ENCODE measurements at regions of chr1 and their contacts with region 1.

Region 1: DNA sequence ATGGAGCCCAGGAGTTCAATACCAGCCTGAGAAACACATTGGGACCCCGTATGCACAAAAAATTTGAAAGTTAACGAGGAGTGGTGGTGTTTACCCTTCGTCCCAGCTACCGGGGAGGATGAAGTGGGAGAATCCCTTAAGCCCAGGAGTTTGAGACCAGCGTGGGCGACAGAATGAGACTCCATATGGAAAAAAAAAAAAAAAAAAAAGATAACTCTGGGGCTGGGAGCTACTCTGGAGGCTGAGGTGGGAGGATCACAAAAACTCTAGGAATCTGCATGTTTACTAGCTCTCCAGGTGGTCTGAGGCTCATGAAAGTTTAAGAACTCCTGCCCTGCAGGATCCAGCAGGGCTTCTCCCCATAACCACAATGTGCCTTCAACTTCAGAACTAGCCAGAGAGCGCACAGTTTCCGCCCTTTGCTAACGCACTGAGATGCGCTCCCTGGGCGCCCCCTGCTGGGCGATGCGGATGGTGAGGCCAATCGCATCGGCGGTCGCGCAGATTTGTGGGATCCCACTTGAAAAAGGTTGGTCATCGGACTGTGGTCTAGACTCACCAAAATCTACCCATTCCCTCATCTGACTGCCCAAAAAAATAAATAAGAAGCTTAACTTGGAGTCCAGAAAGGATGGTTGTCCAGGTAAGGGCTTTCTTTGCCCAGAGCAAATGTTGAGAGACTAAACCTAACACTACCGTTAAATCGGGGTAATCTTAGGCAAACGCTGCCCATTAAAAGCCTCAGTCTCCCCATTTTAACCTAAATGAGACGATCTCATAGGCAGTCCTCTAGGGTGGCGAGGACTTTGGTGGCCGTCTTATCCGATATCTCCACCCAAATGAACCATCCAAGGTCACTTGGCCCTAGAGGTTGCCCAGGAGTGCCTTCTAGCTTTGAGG is 8.8 kb downstream of the ZNF683 start:
- DNase-seq: peak; percentile 33
- ATAC-seq: peak; percentile 87
- H3K4me3 ChIP-seq: no peak overlapping the region
- H3K27ac ChIP-seq: no peak overlapping the region
- H3K4me1 ChIP-seq: peaks cover 7 to 21% of the 10 kb centered on the region in 2 experiments; a peak in 3 of 4 replicates
- H3K27me3 ChIP-seq: no peaks in the 10 kb centered on the region
- CTCF ChIP-seq: peak; percentile 89 to 98 (median 98)
- POLR2A ChIP-seq: no peak
- RAD21 ChIP-seq: peak; percentile 89

Region 2: GRCh38 chr1:26378088-26378878 is 14.5 kb after region 1 on chr1:
- CTCF ChIA-PET with region 1: interaction called, 18 read pairs
- POLR2A ChIA-PET with region 1: interaction called, 4 read pairs
- RAD21 ChIA-PET with region 1: interaction called in 1 of 2 experiments, 6 read pairs
- intact Hi-C with region 1: no loop called
- DNase-seq: no peak
- ATAC-seq: peak; percentile 88
- H3K4me3 ChIP-seq: peak overlapping the region in 1 of 2 experiments; percentile 2; a peak in 1 of 4 replicates
- H3K27ac ChIP-seq: peak overlapping the region; percentile 30; the same call in 1 of the 2 replicates
- H3K4me1 ChIP-seq: peaks cover 18 to 25% of the 10 kb centered on the region in 2 experiments
- H3K27me3 ChIP-seq: no peaks in the 10 kb centered on the region
- CTCF ChIP-seq: no peak
- POLR2A ChIP-seq: no peak
- RAD21 ChIP-seq: no peak

Region 3: GRCh38 chr1:26602378-26602959 is 238.7 kb after region 1 on chr1:
- CTCF ChIA-PET with region 1: no interaction called
- POLR2A ChIA-PET with region 1: no interaction called
- RAD21 ChIA-PET with region 1: no interaction called
- intact Hi-C with region 1: no loop called
- DNase-seq: peak; percentile 51
- ATAC-seq: 0 out of 2 replicates have a peak, but pooled peaks have one; percentile 38
- H3K4me3 ChIP-seq: no peak overlapping the region
- H3K27ac ChIP-seq: no peak overlapping the region
- H3K4me1 ChIP-seq: peaks cover 0 to 10% of the 10 kb centered on the region in 2 experiments; a peak in 3 of 4 replicates
- H3K27me3 ChIP-seq: no peaks in the 10 kb centered on the region; the same call in 1 of the 2 replicates
- CTCF ChIP-seq: peak; percentile 77 to 95 (median 92)
- POLR2A ChIP-seq: no peak
- RAD21 ChIP-seq: peak; percentile 99

Region 4: GRCh38 chr1:26692793-26693490 is 329.1 kb after region 1 on chr1:
- CTCF ChIA-PET with region 1: no interaction called
- POLR2A ChIA-PET with region 1: no interaction called
- RAD21 ChIA-PET with region 1: no interaction called
- intact Hi-C with region 1: no loop called
- DNase-seq: peak; percentile 98
- ATAC-seq: peak; percentile 53
- H3K4me3 ChIP-seq: peak overlapping the region; percentile 59 to 64
- H3K27ac ChIP-seq: peak overlapping the region; percentile 94
- H3K4me1 ChIP-seq: peaks cover 26 to 57% of the 10 kb centered on the region in 2 experiments
- H3K27me3 ChIP-seq: no peaks in the 10 kb centered on the region
- CTCF ChIP-seq: no peak
- POLR2A ChIP-seq: peak; percentile 34
- RAD21 ChIP-seq: no peak

Measured in HCT116 (cell line).